Dendritic cell treated with granulocyte-macrophage colony-stimulating factor and Interleukin-4, amounts not matched to agents 40 ng/mL and 50 ng/mL, for 4 days (primary cell): ENCODE measurements at regions of chr19 and their contacts with region 1.

Region 1: DNA sequence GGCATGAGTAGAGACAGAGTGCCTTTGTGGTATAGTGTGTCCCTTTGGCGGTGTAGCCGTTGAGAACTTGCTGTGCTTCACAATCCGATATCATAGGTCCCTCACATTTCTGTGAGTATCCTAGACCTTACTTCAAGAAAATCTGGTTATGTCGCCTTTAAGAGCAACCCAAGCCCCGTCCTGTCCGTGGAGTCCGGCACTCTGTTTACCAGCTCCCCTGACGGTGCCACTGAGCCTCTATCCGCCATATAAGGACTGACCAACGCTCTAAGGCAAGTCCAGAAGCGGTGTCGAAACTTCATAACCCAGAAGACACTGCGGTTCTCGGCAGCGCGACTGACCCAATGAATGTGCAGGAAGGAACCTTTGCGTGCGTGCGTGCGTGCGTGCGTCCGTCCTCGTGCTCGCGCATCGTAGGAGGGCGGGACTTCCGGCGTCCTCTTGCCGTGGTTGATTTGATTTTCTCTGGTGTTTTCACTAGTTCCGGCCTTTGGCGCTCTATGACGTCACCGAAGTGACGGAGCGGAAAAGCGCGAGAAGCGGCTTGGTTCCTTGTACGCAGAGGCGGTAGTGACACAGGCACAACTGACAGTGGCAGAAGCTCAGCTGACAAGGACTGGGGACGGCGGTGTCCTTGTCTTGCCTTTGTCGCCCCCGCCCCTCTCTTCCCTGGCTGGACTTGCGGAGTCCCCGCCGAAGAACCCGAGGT is at the starts of genes TRAPPC2B and ZNF547:
- H3K4me3 Mint-ChIP-seq: peak within 1 kb of the TSS; percentile 81
- H3K27ac Mint-ChIP-seq: peak within 1 kb of the TSS; percentile 85
- H3K4me1 Mint-ChIP-seq: peaks cover 13% of the 10 kb centered on the region
- H3K27me3 Mint-ChIP-seq: peaks cover 3% of the 10 kb centered on the region

Region 2: DNA sequence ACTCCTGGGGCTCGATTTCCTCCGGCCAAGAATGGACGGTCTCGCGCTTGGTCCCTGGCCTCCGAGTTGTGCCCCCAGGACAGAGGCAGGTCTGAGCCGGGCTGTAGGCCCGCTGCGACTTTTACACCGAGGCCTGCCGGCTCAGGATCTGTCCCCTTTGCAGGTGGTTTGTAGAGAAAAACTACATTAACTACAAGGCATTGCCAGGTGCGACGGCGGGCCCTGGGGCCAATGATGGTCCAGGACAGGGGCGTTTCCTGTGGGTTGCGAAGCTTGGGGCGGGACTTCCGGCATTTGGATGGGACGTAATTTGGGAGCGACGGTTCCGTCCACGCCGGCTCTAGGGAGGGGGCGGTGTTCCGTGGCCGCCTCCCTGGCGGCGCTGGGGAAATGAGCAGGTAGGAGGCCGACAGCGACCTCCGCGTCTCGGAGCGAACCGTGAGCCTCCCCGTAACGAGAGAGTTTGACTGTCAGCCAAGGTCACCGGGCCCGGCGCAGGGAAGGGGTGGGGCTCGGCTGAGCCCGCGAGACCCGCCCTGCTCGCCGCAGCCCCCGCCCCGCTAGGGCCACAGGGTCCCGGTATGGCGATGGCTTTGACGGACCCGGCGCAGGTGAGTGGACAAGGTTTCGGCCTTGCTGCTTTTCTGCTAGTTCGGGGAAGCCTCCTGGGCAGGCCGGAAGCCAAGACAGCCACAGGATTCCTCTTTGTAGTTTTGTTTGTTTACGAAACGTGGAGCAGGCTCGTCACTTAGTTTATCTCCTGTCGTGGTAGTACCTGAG is 122.7 kb before region 1 on chr19 and contains the start of gene ZNF805:
- intact Hi-C with region 1: loop called (anchors 1 kb)
- H3K4me3 Mint-ChIP-seq: peak within 1 kb of the TSS; percentile 92
- H3K27ac Mint-ChIP-seq: peak within 1 kb of the TSS; percentile 96
- H3K4me1 Mint-ChIP-seq: peaks cover 27% of the 10 kb centered on the region
- H3K27me3 Mint-ChIP-seq: no peaks in the 10 kb centered on the region

Region 3: GRCh38 chr19:57320180-57321084 is 42.7 kb before region 1 on chr19 and contains the start of gene ZNF543:
- intact Hi-C with region 1: loop called (anchors 1 kb)
- H3K4me3 Mint-ChIP-seq: peak within 1 kb of the TSS; percentile 81
- H3K27ac Mint-ChIP-seq: peak within 1 kb of the TSS; percentile 95
- H3K4me1 Mint-ChIP-seq: peaks cover 27% of the 10 kb centered on the region
- H3K27me3 Mint-ChIP-seq: peaks cover 33% of the 10 kb centered on the region

Region 4: GRCh38 chr19:57350877-57351805 is 12.0 kb before region 1 on chr19 and contains the start of gene ZNF304:
- intact Hi-C with region 1: loop called (anchors 1 kb)
- H3K4me3 Mint-ChIP-seq: peak within 1 kb of the TSS; percentile 92
- H3K27ac Mint-ChIP-seq: peak within 1 kb of the TSS; percentile 90
- H3K4me1 Mint-ChIP-seq: peaks cover 23% of the 10 kb centered on the region
- H3K27me3 Mint-ChIP-seq: peaks cover 9% of the 10 kb centered on the region

Region 5: DNA sequence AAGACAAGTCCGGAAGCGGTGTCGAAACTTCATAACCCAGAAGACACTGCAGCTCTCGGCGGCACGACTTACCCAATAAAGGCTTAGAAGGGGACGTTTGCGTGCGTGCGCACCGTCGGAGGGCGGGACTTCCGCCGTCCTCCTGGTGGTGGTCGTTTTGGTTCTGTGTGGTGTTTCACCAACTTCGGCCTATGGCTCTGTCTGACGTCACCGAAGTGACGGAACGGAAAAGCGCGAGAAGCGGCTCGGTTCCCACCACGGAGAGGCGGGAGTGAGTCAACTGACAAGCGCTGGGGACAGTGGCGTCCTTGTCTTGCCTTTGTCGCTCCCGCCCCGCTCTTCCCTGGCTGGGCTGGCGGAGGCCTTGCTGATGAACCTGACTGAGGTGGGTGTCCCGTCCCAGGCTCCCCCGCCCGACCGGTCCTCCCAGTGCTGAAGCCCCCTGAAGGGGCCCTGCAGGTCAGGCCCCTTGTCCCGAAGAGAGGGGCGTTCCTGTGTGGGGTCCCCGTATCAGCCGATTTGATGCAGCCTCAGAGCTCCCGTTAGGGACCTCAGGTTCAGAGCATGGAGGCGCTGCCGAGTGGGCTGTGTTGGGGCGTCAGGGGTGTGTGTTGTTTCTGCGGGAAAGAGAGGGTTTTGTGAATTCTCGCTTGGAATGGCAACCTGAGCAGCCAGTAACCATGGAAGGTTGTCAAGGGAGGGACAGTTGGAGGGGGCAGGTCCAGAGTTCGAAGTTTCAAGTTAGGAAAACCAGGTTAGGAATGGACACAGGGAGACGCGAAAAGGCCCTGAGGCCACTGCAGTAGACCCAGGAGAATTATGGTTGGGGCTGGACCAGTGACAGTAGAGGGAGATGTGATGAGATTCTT is 26.8 kb after region 1 on chr19 and contains the start of gene ZNF548:
- intact Hi-C with region 1: loop called (anchors 1 kb)
- H3K4me3 Mint-ChIP-seq: peak within 1 kb of the TSS; percentile 86
- H3K27ac Mint-ChIP-seq: peak within 1 kb of the TSS; percentile 89
- H3K4me1 Mint-ChIP-seq: peaks cover 18% of the 10 kb centered on the region
- H3K27me3 Mint-ChIP-seq: peaks cover 4% of the 10 kb centered on the region

Region 6: GRCh38 chr19:57410877-57411671 is 47.9 kb after region 1 on chr19 and contains the start of gene ZNF17:
- intact Hi-C with region 1: loop called (anchors 2 kb)
- H3K4me3 Mint-ChIP-seq: peak within 1 kb of the TSS; percentile 95
- H3K27ac Mint-ChIP-seq: peak within 1 kb of the TSS; percentile 87
- H3K4me1 Mint-ChIP-seq: peaks cover 11% of the 10 kb centered on the region
- H3K27me3 Mint-ChIP-seq: no peaks in the 10 kb centered on the region